ENCODE measurements at regions of chr7 and their contacts with region 1.

Region 1: GRCh38 chr7:30240106-30240800 is 44.1 kb upstream of the ZNRF2 start:
- DNase-seq: peak; percentile 61
- H3K4me3 ChIP-seq: no peak overlapping the region
- H3K27ac ChIP-seq: no peak overlapping the region
- H3K4me1 ChIP-seq: peaks cover 37% of the 10 kb centered on the region
- H3K27me3 ChIP-seq: no peaks in the 10 kb centered on the region
- CTCF ChIP-seq: no peak

Region 2: DNA sequence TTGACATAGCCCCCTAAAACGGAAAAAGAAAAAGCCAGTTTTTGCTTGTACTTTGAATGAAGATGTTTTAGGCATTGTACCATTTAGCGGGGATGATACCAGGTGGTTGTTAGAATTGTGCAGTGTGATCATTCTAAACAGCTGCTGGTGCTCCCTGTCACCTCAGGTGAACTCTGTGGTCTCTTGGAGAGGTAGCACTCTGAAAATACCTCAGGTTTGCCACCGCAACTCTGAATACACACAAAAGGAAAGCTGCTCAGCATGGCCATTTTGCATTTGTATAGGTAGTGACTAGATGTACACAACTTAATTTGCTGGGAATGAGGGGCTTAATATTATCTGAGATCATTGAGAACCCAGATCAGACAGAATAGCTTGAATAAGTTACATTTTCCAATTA is 159.4 kb before region 1 on chr7:
- CTCF ChIA-PET with region 1: no interaction called
- dilution Hi-C with region 1: no loop called
- in situ Hi-C with region 1: no loop called
- intact Hi-C with region 1: no loop called
- DNase-seq: no peak
- H3K4me3 ChIP-seq: no peak overlapping the region
- H3K27ac ChIP-seq: no peak overlapping the region
- H3K4me1 ChIP-seq: no peaks in the 10 kb centered on the region
- H3K27me3 ChIP-seq: no peaks in the 10 kb centered on the region
- CTCF ChIP-seq: no peak

Region 3: DNA sequence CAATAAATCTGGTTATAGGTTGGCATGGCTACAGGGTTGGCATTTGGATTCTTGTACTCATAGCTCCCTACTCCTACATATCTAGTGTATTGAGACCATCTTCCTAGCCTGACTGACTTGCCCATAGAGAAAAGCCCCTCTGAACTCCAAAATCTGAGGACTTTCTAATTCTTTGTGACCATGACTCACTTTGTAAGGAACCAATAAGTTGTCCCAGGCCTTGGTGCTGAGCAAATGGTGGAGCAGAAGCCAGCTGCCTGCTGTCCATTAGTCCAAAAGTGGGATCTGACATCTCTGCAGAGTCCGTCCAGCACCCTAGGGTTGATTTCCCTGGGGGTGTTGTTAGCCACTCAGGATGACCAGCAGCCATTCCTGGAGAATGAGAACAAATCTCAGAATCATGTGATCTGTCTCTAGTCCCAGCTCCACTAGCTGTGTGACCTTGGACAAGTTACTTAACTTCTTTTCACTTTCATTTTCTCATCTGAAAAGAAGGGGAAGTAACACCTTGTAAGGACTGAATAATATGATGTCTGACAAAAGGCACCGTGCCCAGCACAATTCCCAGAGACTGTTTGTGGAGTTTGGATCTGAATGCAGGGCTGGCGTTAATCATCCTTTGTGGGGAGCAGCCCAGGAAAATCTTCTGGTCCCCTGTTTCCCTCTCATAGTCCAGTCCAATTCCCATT is 61.4 kb before region 1 on chr7:
- CTCF ChIA-PET with region 1: no interaction called
- dilution Hi-C with region 1: loop called (anchors 5 kb)
- in situ Hi-C with region 1: no loop called
- intact Hi-C with region 1: no loop called
- DNase-seq: no peak
- H3K4me3 ChIP-seq: no peak overlapping the region
- H3K27ac ChIP-seq: no peak overlapping the region
- H3K4me1 ChIP-seq: peaks cover under 1% of the 10 kb centered on the region
- H3K27me3 ChIP-seq: no peaks in the 10 kb centered on the region
- CTCF ChIP-seq: no peak

Region 4: DNA sequence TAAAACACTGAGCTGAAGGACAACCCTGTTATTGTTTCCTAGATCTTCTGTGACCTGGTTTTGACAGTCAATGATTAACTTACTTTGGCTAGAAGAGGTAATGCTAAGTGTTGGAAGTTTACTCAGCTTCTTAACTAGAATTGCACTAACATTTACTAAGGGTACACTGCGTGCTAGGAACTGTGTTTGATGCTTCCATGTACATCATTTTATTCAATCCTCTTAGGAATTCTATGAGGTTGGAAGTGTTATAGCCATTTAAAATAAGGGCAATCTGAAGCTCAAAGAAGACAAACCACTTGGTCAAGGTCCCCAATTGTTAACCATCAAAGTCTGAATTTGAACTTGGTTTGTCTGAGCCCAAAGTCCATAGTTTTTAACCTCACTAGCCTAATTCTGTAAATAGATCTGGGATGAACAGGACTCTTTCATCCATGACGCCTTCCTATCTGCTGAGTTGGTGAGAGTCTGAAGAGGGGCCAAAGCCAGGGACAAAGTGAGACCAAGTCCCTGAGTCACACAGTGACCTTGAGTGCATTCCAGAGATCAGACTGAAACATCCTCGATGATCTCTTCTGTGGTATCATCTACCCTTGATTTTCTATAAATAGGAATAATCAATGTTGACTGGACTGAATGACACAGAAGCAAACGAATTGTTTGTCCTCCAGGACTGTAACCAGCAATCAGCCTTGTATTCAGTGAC is 15.0 kb after region 1 on chr7:
- CTCF ChIA-PET with region 1: no interaction called
- dilution Hi-C with region 1: no loop called
- in situ Hi-C with region 1: no loop called
- intact Hi-C with region 1: loop called (anchors 2 kb)
- DNase-seq: no peak
- H3K4me3 ChIP-seq: no peak overlapping the region
- H3K27ac ChIP-seq: no peak overlapping the region
- H3K4me1 ChIP-seq: peaks cover 15% of the 10 kb centered on the region
- H3K27me3 ChIP-seq: no peaks in the 10 kb centered on the region
- CTCF ChIP-seq: no peak

Measured in mammary epithelial cell (primary cell).